ENCODE measurements at regions of chr5 and their contacts with region 1.

Region 1: GRCh38 chr5:154196955-154197652 is 6.6 kb downstream of the GALNT10 start:
- DNase-seq: no peak
- H3K4me3 Mint-ChIP-seq: no peak overlapping the region
- H3K27ac Mint-ChIP-seq: peak overlapping the region; percentile 67
- H3K4me1 Mint-ChIP-seq: peaks cover 63% of the 10 kb centered on the region
- H3K27me3 Mint-ChIP-seq: no peaks in the 10 kb centered on the region
- CTCF ChIP-seq: no peak

Region 2: DNA sequence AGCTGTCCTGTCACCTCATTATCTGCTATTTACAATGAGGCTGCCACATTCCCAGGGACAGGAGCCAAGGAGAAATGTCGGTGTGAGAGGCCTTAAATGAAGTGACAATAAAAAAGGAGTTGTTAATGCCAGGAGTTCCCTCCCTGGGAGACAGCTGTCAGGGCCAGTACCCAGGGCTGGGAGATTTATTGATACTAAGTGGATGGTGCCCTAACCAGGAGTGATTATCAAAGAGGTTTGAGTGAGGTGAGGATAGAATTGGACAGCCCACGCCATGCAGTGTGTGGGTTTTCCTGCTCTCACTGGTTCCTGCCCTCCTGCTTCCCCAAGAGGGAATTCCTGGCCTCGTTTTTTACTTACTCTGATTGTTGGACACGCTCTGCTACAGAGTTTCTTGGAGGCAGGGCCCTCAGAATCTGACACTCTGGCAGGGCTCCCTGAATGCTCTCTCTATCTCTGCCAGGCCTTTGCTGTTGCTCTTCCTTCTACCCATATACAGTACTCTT is 555.9 kb before region 1 on chr5:
- CTCF ChIA-PET with region 1: no interaction called
- intact Hi-C with region 1: no loop called
- DNase-seq: no peak
- H3K4me3 Mint-ChIP-seq: no peak overlapping the region
- H3K27ac Mint-ChIP-seq: no peak overlapping the region
- H3K4me1 Mint-ChIP-seq: no peaks in the 10 kb centered on the region
- H3K27me3 Mint-ChIP-seq: peaks cover 56% of the 10 kb centered on the region
- CTCF ChIP-seq: no peak

Region 3: GRCh38 chr5:154221371-154221896 is 24.3 kb after region 1 on chr5:
- CTCF ChIA-PET with region 1: interaction called, 5 read pairs
- intact Hi-C with region 1: loop called (anchors 2 kb)
- DNase-seq: peak; percentile 65
- H3K4me3 Mint-ChIP-seq: peak overlapping the region; percentile 23
- H3K27ac Mint-ChIP-seq: peak overlapping the region; percentile 71
- H3K4me1 Mint-ChIP-seq: peaks cover 47% of the 10 kb centered on the region
- H3K27me3 Mint-ChIP-seq: no peaks in the 10 kb centered on the region
- CTCF ChIP-seq: no peak

Region 4: GRCh38 chr5:154287136-154287535 is 90.0 kb after region 1 on chr5:
- CTCF ChIA-PET with region 1: interaction called, 15 read pairs
- intact Hi-C with region 1: loop called (anchors 1 kb)
- DNase-seq: peak; percentile 71
- H3K4me3 Mint-ChIP-seq: peak overlapping the region; percentile 55
- H3K27ac Mint-ChIP-seq: peak overlapping the region; percentile 54
- H3K4me1 Mint-ChIP-seq: peaks cover 53% of the 10 kb centered on the region
- H3K27me3 Mint-ChIP-seq: no peaks in the 10 kb centered on the region
- CTCF ChIP-seq: no peak

Region 5: GRCh38 chr5:154296525-154297208 is 99.6 kb after region 1 on chr5:
- CTCF ChIA-PET with region 1: interaction called, 16 read pairs
- intact Hi-C with region 1: no loop called
- DNase-seq: peak; percentile 48
- H3K4me3 Mint-ChIP-seq: peak overlapping the region; percentile 31
- H3K27ac Mint-ChIP-seq: peak overlapping the region; percentile 5
- H3K4me1 Mint-ChIP-seq: peaks cover 61% of the 10 kb centered on the region
- H3K27me3 Mint-ChIP-seq: no peaks in the 10 kb centered on the region
- CTCF ChIP-seq: no peak

Region 6: DNA sequence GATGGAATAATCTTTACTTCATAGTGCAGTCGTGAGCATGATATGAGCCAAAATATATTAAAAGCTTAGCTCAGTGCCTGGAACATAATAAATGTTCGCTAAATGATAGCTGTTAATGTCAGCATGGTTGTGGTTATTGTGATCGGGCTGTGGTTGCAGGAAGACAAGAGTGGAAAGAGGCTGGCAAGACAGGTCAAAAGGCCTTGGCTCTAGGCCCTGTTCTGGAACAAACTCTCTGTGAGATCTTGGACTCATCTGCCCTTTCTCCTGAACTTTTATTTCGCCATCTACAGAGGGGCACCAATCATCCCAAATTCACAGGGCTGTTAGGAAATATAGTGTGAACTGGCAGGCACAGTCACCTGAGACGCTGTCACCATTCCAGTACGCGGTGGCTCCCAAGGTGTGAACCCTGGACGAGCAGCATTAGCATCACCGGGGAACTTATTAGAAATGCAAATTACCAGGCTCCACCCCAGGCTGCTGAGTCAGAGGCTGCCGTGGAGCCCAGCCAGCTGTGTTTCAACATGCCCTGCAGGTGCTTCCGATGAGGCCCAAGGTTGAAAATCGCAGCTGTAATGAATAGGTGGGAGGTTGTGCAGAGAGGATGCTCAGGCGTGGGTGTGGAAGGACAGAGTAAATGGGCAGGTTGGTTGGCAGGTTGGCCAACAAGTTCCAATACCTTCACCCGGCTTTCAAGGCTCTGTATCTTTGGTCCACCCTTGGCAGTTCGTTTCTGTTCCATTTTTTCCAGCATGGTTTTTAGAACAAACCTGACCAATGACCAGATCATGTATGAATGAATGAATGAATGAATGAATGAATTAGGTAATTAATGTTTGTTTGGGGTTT is 198.5 kb after region 1 on chr5:
- CTCF ChIA-PET with region 1: interaction called, 7 read pairs
- intact Hi-C with region 1: loop called (anchors 2 kb)
- DNase-seq: peak; percentile 80
- H3K4me3 Mint-ChIP-seq: no peak overlapping the region
- H3K27ac Mint-ChIP-seq: peak overlapping the region; percentile 34
- H3K4me1 Mint-ChIP-seq: peaks cover 66% of the 10 kb centered on the region
- H3K27me3 Mint-ChIP-seq: no peaks in the 10 kb centered on the region
- CTCF ChIP-seq: no peak

Region 7: GRCh38 chr5:154405078-154405792 is 208.1 kb after region 1 on chr5:
- CTCF ChIA-PET with region 1: interaction called, 30 read pairs
- intact Hi-C with region 1: loop called (anchors 1 kb)
- DNase-seq: peak; percentile 89
- H3K4me3 Mint-ChIP-seq: peak overlapping the region; percentile 54
- H3K27ac Mint-ChIP-seq: no peak overlapping the region
- H3K4me1 Mint-ChIP-seq: no peaks in the 10 kb centered on the region
- H3K27me3 Mint-ChIP-seq: no peaks in the 10 kb centered on the region
- CTCF ChIP-seq: peak; percentile 88

Measured in Calu3 (cell line).